ENCODE measurements at regions of chr16 and their contacts with region 1.

Region 1: GRCh38 chr16:50497592-50497991 is 50.6 kb upstream of the NKD1 start:
- DNase-seq: no peak
- H3K4me3 Mint-ChIP-seq: no peak overlapping the region
- H3K27ac Mint-ChIP-seq: no peak overlapping the region
- H3K4me1 Mint-ChIP-seq: no peaks in the 10 kb centered on the region
- H3K27me3 Mint-ChIP-seq: no peaks in the 10 kb centered on the region

Region 2: DNA sequence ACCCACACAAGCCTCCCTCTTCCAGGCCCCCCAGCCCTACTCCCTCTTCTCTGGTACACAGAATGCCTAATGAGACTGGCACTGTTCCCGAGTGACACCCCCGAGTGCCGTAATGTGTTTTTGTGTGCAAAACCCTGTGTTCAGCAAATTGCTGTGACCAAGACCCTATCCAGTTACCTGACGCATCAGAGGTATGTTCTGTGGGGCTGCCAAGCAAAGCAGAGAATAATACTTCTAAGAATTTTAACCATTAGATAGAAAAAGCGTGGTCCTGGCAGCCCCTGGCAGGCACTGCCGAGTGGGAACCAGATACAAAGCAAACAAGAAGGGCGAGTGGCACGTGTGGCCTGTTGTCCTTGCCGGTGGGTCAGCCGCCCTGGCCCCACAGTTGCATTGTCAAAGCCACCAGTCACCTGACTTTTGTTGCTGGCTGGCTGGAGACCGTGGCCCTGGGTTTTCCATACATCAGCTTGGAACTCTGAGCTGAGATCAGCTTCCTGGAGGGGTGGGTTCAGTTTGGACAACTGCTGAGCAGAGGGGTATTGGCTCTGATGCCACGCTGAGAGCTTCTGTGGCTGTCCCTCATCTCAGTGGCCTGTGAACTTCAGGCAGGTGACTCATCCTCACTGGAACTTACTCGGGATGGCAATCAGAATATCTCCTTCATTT is 59.7 kb before region 1 on chr16:
- CTCF ChIA-PET with region 1: no interaction called
- POLR2A ChIA-PET with region 1: no interaction called
- intact Hi-C with region 1: loop called (anchors 10 kb)
- DNase-seq: no peak
- H3K4me3 Mint-ChIP-seq: no peak overlapping the region
- H3K27ac Mint-ChIP-seq: no peak overlapping the region
- H3K4me1 Mint-ChIP-seq: no peaks in the 10 kb centered on the region
- H3K27me3 Mint-ChIP-seq: peaks cover 6% of the 10 kb centered on the region